CD8-positive, alpha-beta T cell (primary cell): ENCODE measurements at regions of chr9 and their contacts with region 1.

Region 1: GRCh38 chr9:120714088-120714845 is at the start of gene MEGF9:
- DNase-seq: peak; percentile 89 to 98 (median 96)
- ATAC-seq: peak; percentile 94
- H3K4me3 ChIP-seq: peak within 1 kb of the TSS; percentile 69 to 92
- H3K4me3 Mint-ChIP-seq: peak within 1 kb of the TSS; percentile 83
- H3K27ac ChIP-seq: peak within 1 kb of the TSS; percentile 61 to 64
- H3K27ac Mint-ChIP-seq: peak within 1 kb of the TSS; percentile 86
- H3K4me1 ChIP-seq: peaks cover 38% of the 10 kb centered on the region
- H3K4me1 Mint-ChIP-seq: peaks cover 35% of the 10 kb centered on the region
- H3K27me3 ChIP-seq: no peaks in the 10 kb centered on the region
- H3K27me3 Mint-ChIP-seq: no peaks in the 10 kb centered on the region
- CTCF ChIP-seq: no peak
- total RNA-seq, gene MEGF9: 3.0 to 3.1 TPM

Region 2: GRCh38 chr9:120579750-120580590 is 134.3 kb before region 1 on chr9 and contains the start of gene CDK5RAP2:
- CTCF ChIA-PET with region 1: no interaction called
- POLR2A ChIA-PET with region 1: no interaction called
- intact Hi-C with region 1: loop called (anchors 2 kb)
- DNase-seq: peak; percentile 83 to 98 (median 91)
- ATAC-seq: peak; percentile 98
- H3K4me3 ChIP-seq: peak within 1 kb of the TSS; percentile 63 to 86
- H3K4me3 Mint-ChIP-seq: peak within 1 kb of the TSS; percentile 92
- H3K27ac ChIP-seq: peak within 1 kb of the TSS; percentile 68 to 77
- H3K27ac Mint-ChIP-seq: peak within 1 kb of the TSS; percentile 95
- H3K4me1 ChIP-seq: peaks cover 25% of the 10 kb centered on the region
- H3K4me1 Mint-ChIP-seq: peaks cover 56% of the 10 kb centered on the region
- H3K27me3 ChIP-seq: no peaks in the 10 kb centered on the region
- H3K27me3 Mint-ChIP-seq: no peaks in the 10 kb centered on the region
- CTCF ChIP-seq: no peak
- total RNA-seq, gene CDK5RAP2: 52.1 to 55.2 TPM

Region 3: GRCh38 chr9:120619751-120620655 is 94.3 kb before region 1 on chr9:
- CTCF ChIA-PET with region 1: interaction called, 5 read pairs
- POLR2A ChIA-PET with region 1: interaction called, 7 read pairs
- intact Hi-C with region 1: loop called (anchors 2 to 5 kb)
- DNase-seq: peak; percentile 8 to 76 (median 59)
- ATAC-seq: peak; percentile 65
- H3K4me3 ChIP-seq: no peak overlapping the region
- H3K4me3 Mint-ChIP-seq: no peak overlapping the region
- H3K27ac ChIP-seq: no peak overlapping the region
- H3K27ac Mint-ChIP-seq: no peak overlapping the region
- H3K4me1 ChIP-seq: no peaks in the 10 kb centered on the region
- H3K4me1 Mint-ChIP-seq: no peaks in the 10 kb centered on the region
- H3K27me3 ChIP-seq: no peaks in the 10 kb centered on the region
- H3K27me3 Mint-ChIP-seq: no peaks in the 10 kb centered on the region
- CTCF ChIP-seq: peak; percentile 98

Region 4: DNA sequence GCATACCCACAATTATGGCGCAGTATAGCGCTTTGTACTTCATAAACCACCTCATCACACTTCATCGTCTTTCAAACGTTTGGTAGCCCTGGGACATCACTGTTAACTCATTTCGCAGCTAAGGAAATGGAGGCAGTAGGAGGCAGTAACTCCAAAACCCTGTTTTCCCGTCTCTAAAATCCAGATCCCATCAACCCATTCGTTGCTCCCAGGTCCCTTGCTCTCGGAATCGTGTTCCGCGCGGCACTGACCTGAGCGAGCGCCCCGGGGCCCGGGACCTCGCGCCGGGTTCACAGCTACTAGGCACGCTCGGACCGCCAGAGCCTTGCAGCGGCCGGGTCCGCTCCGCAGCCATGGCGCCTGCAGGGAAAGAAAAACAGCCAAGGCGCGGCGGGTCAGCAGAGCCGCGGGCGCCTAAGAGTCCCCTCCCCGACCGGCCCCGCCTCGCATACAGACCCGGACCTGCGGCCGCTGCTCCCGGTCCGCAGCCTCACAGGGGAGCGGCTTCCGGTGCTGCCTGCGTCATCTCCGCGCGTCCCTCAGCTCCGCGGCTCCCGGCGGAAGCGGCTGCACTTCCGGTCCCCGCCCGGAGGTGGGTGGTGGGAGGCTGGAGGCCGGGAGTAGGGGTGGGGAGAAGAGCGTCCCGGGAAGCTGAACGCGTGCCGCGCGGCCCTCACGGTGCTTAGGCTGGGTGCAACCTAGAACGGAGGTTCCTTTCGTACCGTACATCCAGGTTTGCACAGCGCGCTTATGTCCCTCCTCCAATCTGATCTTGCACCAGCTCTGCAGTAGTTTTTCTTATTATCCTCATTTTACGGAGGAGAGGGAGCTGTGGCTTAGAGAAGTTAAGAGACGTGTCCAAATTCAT is 78.9 kb after region 1 on chr9 and contains the start of gene FBXW2:
- CTCF ChIA-PET with region 1: no interaction called
- POLR2A ChIA-PET with region 1: interaction called, 3 read pairs
- intact Hi-C with region 1: loop called (anchors 2 kb)
- DNase-seq: peak; percentile 50 to 93 (median 84)
- ATAC-seq: peak; percentile 81
- H3K4me3 ChIP-seq: peak within 1 kb of the TSS; percentile 60 to 88
- H3K4me3 Mint-ChIP-seq: peak within 1 kb of the TSS; percentile 85
- H3K27ac ChIP-seq: peak within 1 kb of the TSS; percentile 88 to 90
- H3K27ac Mint-ChIP-seq: peak within 1 kb of the TSS; percentile 87
- H3K4me1 ChIP-seq: peaks cover 26% of the 10 kb centered on the region
- H3K4me1 Mint-ChIP-seq: peaks cover 60% of the 10 kb centered on the region
- H3K27me3 ChIP-seq: no peaks in the 10 kb centered on the region
- H3K27me3 Mint-ChIP-seq: no peaks in the 10 kb centered on the region
- CTCF ChIP-seq: no peak
- total RNA-seq, gene FBXW2: 51.9 to 54.7 TPM